Activated naive CD4-positive, alpha-beta T cell treated with anti-CD3 and anti-CD28 coated beads for 36 hours (primary cell): ENCODE measurements at regions of chr11 and their contacts with region 1.

Region 1: GRCh38 chr11:122754553-122755322 is 83.6 kb upstream of the CRTAM start:
- DNase-seq: peak; percentile 49
- H3K4me3 Mint-ChIP-seq: no peak overlapping the region
- H3K27ac Mint-ChIP-seq: no peak overlapping the region
- H3K4me1 Mint-ChIP-seq: peaks cover 44% of the 10 kb centered on the region
- H3K27me3 Mint-ChIP-seq: peaks cover 2% of the 10 kb centered on the region

Region 2: GRCh38 chr11:122578168-122578825 is 176.4 kb before region 1 on chr11:
- CTCF ChIA-PET with region 1: interaction called, 14 read pairs
- intact Hi-C with region 1: loop called (anchors 1 kb)
- DNase-seq: peak; percentile 17
- H3K4me3 Mint-ChIP-seq: no peak overlapping the region
- H3K27ac Mint-ChIP-seq: no peak overlapping the region
- H3K4me1 Mint-ChIP-seq: peaks cover 7% of the 10 kb centered on the region
- H3K27me3 Mint-ChIP-seq: no peaks in the 10 kb centered on the region

Region 3: GRCh38 chr11:122637541-122637940 is 117.2 kb before region 1 on chr11:
- CTCF ChIA-PET with region 1: interaction called, 35 read pairs
- intact Hi-C with region 1: loop called (anchors 1 kb)
- DNase-seq: peak; percentile 45
- H3K4me3 Mint-ChIP-seq: no peak overlapping the region
- H3K27ac Mint-ChIP-seq: no peak overlapping the region
- H3K4me1 Mint-ChIP-seq: peaks cover 9% of the 10 kb centered on the region
- H3K27me3 Mint-ChIP-seq: no peaks in the 10 kb centered on the region

Region 4: DNA sequence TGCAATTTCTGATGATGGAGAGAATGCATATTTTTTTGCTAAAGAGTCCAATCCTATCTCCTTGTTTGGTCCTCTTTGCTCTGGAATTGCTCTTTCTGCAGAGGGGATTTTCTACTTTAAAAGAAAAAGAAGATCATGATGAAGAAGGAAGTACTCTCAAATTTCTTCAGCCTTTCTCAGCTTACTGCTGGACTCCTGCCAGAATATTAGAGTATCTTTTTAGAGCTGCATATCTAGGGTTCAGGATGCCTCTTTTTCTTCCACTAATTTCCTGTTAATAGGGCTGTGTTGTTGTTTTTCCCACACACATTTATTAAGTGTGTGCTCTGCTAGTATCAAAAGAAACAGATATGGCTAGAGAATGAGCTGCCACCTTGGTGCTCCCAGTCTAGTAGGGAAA is 81.0 kb before region 1 on chr11:
- CTCF ChIA-PET with region 1: interaction called, 16 read pairs
- intact Hi-C with region 1: no loop called
- DNase-seq: no peak
- H3K4me3 Mint-ChIP-seq: no peak overlapping the region
- H3K27ac Mint-ChIP-seq: no peak overlapping the region
- H3K4me1 Mint-ChIP-seq: peaks cover 68% of the 10 kb centered on the region
- H3K27me3 Mint-ChIP-seq: no peaks in the 10 kb centered on the region

Region 5: GRCh38 chr11:122743949-122744348 is 10.8 kb before region 1 on chr11:
- CTCF ChIA-PET with region 1: interaction called, 30 read pairs
- intact Hi-C with region 1: no loop called
- DNase-seq: peak; percentile 91
- H3K4me3 Mint-ChIP-seq: no peak overlapping the region
- H3K27ac Mint-ChIP-seq: no peak overlapping the region
- H3K4me1 Mint-ChIP-seq: peaks cover 5% of the 10 kb centered on the region
- H3K27me3 Mint-ChIP-seq: peaks cover 6% of the 10 kb centered on the region

Region 6: GRCh38 chr11:122772945-122773344 is 18.2 kb after region 1 on chr11:
- CTCF ChIA-PET with region 1: interaction called, 15 read pairs
- intact Hi-C with region 1: loop called (anchors 1 kb)
- DNase-seq: no peak
- H3K4me3 Mint-ChIP-seq: no peak overlapping the region
- H3K27ac Mint-ChIP-seq: no peak overlapping the region
- H3K4me1 Mint-ChIP-seq: peaks cover 43% of the 10 kb centered on the region
- H3K27me3 Mint-ChIP-seq: no peaks in the 10 kb centered on the region

Region 7: DNA sequence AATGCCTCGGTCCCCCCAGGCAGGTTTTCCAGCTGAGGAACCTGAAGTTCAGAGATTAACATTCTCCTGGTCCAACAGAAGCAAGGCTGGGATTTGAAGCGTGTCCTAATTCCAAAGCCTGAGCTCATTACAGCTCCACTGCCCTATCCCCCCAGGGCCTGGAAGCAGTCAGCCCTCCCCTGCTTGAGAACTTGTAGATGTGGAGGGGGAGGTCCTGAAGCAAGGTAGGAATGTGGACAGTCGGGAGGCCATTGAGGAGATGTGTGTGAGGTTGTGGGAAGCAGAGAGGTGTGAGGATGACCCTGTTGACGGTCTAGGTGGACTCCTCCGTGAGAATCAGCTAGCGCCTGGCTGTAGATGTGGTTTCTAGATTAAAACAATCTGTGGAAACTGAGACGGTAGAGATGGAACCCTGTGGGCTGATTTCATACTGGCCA is 683.5 kb after region 1 on chr11:
- CTCF ChIA-PET with region 1: no interaction called
- intact Hi-C with region 1: no loop called
- DNase-seq: no peak
- H3K4me3 Mint-ChIP-seq: no peak overlapping the region
- H3K27ac Mint-ChIP-seq: no peak overlapping the region
- H3K4me1 Mint-ChIP-seq: peaks cover 41% of the 10 kb centered on the region
- H3K27me3 Mint-ChIP-seq: no peaks in the 10 kb centered on the region

Region 8: GRCh38 chr11:123603376-123604065 is 848.8 kb after region 1 on chr11:
- CTCF ChIA-PET with region 1: no interaction called
- intact Hi-C with region 1: no loop called
- DNase-seq: no peak
- H3K4me3 Mint-ChIP-seq: no peak overlapping the region
- H3K27ac Mint-ChIP-seq: no peak overlapping the region
- H3K4me1 Mint-ChIP-seq: no peaks in the 10 kb centered on the region
- H3K27me3 Mint-ChIP-seq: no peaks in the 10 kb centered on the region